ENCODE measurements at regions of chr21 and their contacts with region 1.

Region 1: DNA sequence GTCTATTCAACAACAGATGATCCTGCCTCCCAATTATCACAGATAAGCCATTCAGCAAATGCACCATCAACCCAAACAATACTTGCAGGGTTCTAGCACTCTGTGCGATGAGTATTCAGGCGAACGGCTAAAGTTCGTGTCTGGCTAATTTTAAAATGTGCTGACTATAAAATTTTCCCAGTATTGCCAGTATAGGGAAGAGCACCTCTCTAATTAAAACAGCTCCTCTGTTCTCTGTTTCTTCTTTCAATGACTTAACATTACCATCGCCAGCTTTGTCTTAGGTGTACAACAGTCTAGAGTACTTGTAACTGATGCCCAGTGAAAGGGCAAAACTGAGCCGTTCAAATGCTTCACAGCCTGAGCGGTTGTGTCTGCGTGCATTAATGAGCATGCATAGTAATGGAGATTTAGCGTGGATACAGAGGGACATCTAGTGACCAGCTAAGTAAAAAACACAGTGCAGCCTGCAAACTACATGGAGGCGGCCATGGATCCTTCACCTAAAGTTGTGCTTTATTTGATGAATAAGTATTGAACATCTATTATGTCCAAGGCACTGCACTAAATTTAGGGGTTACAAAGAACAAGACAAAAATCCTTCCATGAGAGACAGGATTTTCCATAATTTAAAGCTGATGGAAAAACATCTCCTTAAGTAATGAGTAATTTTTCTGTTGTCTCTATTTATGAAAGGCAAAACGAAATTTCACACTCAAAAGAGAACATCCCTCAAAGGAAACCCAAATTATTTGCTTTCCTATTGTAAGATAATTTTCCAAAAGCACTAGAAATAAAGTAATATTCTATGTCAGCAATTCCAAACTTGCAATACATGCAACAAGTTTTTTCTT is 120.0 kb downstream of the SETD4 start:
- DNase-seq: peak in 1 of 2 donors; percentile 59
- ATAC-seq: peak; percentile 85
- H3K4me3 ChIP-seq: no peak overlapping the region
- H3K27ac ChIP-seq: no peak overlapping the region
- H3K4me1 ChIP-seq: no peaks in the 10 kb centered on the region
- H3K27me3 ChIP-seq: no peaks in the 10 kb centered on the region

Region 2: DNA sequence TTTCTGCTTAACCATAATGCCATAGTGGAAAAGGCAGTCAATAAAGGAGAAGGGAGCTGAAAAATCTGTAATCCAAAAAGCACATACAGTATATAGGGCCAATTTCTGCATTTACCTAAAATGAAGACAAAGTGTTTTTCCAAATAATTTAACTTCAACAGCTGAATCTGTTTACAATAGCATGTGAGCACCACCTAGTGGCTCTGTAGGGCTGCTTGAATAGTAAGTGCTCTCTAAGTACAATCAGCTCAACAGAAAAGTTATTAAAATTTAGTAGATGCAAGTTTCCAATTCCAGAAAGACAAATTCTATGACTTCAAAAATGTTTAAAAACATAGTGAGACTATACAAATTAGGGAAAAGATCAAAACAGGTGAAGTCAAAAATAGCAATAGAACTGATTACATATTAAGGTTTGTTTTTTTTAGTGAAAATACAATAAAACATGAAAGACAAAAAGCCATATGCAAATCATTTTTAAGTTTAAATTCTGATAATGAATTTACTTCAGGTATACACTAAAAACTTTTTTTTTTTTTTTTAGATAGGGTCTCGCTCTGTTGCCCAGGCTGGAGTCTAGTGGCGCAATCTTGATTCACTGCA is 100.0 kb before region 1 on chr21:
- intact Hi-C with region 1: loop called in 1 of 2 experiments (anchors 5 kb)
- DNase-seq: peak in 1 of 2 donors; percentile 67
- ATAC-seq: no peak
- H3K4me3 ChIP-seq: no peak overlapping the region
- H3K27ac ChIP-seq: no peak overlapping the region
- H3K4me1 ChIP-seq: no peaks in the 10 kb centered on the region
- H3K27me3 ChIP-seq: no peaks in the 10 kb centered on the region

Region 3: GRCh38 chr21:36052860-36053714 is 112.8 kb after region 1 on chr21:
- intact Hi-C with region 1: no loop called
- DNase-seq: no peak
- ATAC-seq: no peak
- H3K4me3 ChIP-seq: no peak overlapping the region
- H3K27ac ChIP-seq: no peak overlapping the region
- H3K4me1 ChIP-seq: no peaks in the 10 kb centered on the region
- H3K27me3 ChIP-seq: no peaks in the 10 kb centered on the region

Measured in aorta (tissue), 5 donors.